ENCODE measurements at regions of chr12 and their contacts with region 1.

Region 1: DNA sequence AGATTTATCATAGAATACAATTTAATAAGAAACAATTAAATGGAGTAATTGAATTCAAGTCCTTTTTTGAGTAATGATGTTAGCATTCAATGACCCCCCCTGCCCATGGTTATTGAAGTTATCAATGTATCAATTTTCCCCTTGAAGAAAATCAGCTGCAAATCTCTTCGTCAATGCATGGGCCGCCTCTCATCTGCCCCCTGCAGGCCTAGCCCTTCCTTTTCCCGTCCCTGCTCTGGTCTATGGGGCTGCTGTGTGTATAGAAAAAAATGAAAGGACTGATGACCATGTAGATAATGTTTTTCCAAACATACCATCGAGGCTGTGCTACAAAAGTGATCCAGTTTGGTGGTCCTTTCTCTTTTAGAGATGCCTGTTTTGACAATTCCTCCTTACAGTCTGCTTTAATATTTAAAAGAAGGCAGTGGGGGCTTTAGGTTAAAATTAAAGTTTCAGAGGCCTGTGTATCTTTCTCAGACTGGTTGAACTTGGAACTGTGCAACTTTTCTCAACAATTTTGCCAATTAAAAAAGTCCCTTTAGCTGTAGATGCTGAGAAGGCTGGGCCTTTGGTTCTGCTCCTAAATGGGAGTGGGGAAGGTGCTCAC is 98.4 kb downstream of the APAF1 start:
- DNase-seq: peak; percentile 11
- H3K4me3 Mint-ChIP-seq: peak overlapping the region; percentile 69
- H3K27ac Mint-ChIP-seq: peak overlapping the region; percentile 76
- H3K4me1 Mint-ChIP-seq: peaks cover 60% of the 10 kb centered on the region
- H3K27me3 Mint-ChIP-seq: peaks cover 5% of the 10 kb centered on the region

Region 2: GRCh38 chr12:97899956-97900355 is 843.5 kb before region 1 on chr12:
- intact Hi-C with region 1: no loop called
- DNase-seq: no peak
- H3K4me3 Mint-ChIP-seq: no peak overlapping the region
- H3K27ac Mint-ChIP-seq: no peak overlapping the region
- H3K4me1 Mint-ChIP-seq: no peaks in the 10 kb centered on the region
- H3K27me3 Mint-ChIP-seq: no peaks in the 10 kb centered on the region

Region 3: GRCh38 chr12:98503592-98504367 is 239.7 kb before region 1 on chr12:
- intact Hi-C with region 1: loop called (anchors 5 kb)
- DNase-seq: peak; percentile 90
- H3K4me3 Mint-ChIP-seq: peak overlapping the region; percentile 91
- H3K27ac Mint-ChIP-seq: peak overlapping the region; percentile 99
- H3K4me1 Mint-ChIP-seq: peaks cover 27% of the 10 kb centered on the region
- H3K27me3 Mint-ChIP-seq: peaks cover 8% of the 10 kb centered on the region

Region 4: GRCh38 chr12:98593351-98594049 is 149.9 kb before region 1 on chr12 and contains the start of gene SLC25A3:
- intact Hi-C with region 1: loop called (anchors 1 kb)
- DNase-seq: peak; percentile 92
- H3K4me3 Mint-ChIP-seq: peak within 1 kb of the TSS; percentile 96
- H3K27ac Mint-ChIP-seq: peak within 1 kb of the TSS; percentile 99
- H3K4me1 Mint-ChIP-seq: peaks cover 29% of the 10 kb centered on the region
- H3K27me3 Mint-ChIP-seq: no peaks in the 10 kb centered on the region
- total RNA-seq, gene SLC25A3: 570 and 580 TPM in 2 replicates

Region 5: GRCh38 chr12:98644711-98645402 is 98.6 kb before region 1 on chr12 and contains the starts of genes APAF1 and IKBIP:
- intact Hi-C with region 1: loop called (anchors 1 kb)
- DNase-seq: peak; percentile 96
- H3K4me3 Mint-ChIP-seq: peak within 1 kb of the TSS; percentile 92
- H3K27ac Mint-ChIP-seq: peak within 1 kb of the TSS; percentile 95
- H3K4me1 Mint-ChIP-seq: peaks cover 49% of the 10 kb centered on the region
- H3K27me3 Mint-ChIP-seq: no peaks in the 10 kb centered on the region
- total RNA-seq, gene APAF1: 21.2 and 23.9 TPM in 2 replicates
- total RNA-seq, gene IKBIP: 35.5 and 36.5 TPM in 2 replicates

Region 6: GRCh38 chr12:98698603-98699463 is 44.6 kb before region 1 on chr12:
- intact Hi-C with region 1: loop called (anchors 1 kb)
- DNase-seq: peak; percentile 26
- H3K4me3 Mint-ChIP-seq: no peak overlapping the region
- H3K27ac Mint-ChIP-seq: no peak overlapping the region
- H3K4me1 Mint-ChIP-seq: peaks cover 21% of the 10 kb centered on the region
- H3K27me3 Mint-ChIP-seq: no peaks in the 10 kb centered on the region

Region 7: GRCh38 chr12:98725476-98726247 is 17.8 kb before region 1 on chr12:
- intact Hi-C with region 1: loop called (anchors 1 kb)
- DNase-seq: peak; percentile 29
- H3K4me3 Mint-ChIP-seq: no peak overlapping the region
- H3K27ac Mint-ChIP-seq: peak overlapping the region; percentile 16
- H3K4me1 Mint-ChIP-seq: peaks cover 14% of the 10 kb centered on the region
- H3K27me3 Mint-ChIP-seq: no peaks in the 10 kb centered on the region

Region 8: GRCh38 chr12:98754095-98754494 is 10.6 kb after region 1 on chr12:
- intact Hi-C with region 1: loop called (anchors 1 kb)
- DNase-seq: peak; percentile 30
- H3K4me3 Mint-ChIP-seq: peak overlapping the region; percentile 59
- H3K27ac Mint-ChIP-seq: peak overlapping the region; percentile 85
- H3K4me1 Mint-ChIP-seq: peaks cover 24% of the 10 kb centered on the region
- H3K27me3 Mint-ChIP-seq: peaks cover 4% of the 10 kb centered on the region

Region 9: DNA sequence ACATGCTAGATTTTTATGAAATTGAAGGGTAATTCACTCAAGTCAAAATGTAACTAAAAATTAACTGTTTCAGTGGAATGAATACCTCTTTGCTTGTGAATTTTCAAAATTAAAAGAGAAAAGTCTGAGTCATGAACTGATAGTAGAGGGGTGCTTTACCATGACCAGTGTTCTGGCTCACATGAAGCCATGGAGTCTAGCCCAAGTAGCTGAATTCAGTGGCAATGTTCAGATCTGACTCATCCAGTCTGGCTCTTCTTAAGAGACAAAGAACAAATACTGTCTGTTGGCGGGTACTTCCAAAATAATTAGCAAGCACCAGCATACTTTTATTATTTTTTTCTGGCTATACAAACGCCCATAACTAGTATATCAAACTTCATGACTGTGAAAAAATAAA is 537.8 kb after region 1 on chr12:
- intact Hi-C with region 1: no loop called
- DNase-seq: no peak
- H3K4me3 Mint-ChIP-seq: no peak overlapping the region
- H3K27ac Mint-ChIP-seq: no peak overlapping the region
- H3K4me1 Mint-ChIP-seq: no peaks in the 10 kb centered on the region
- H3K27me3 Mint-ChIP-seq: no peaks in the 10 kb centered on the region